Caco-2 (cell line): ENCODE measurements at regions of chr10 and their contacts with region 1.

Region 1: GRCh38 chr10:48656241-48656913 is 28.3 kb upstream of the WDFY4 start:
- DNase-seq: peak; percentile 89 to 99
- H3K4me3 ChIP-seq: peak overlapping the region; percentile 55
- H3K4me3 Mint-ChIP-seq: peak overlapping the region; percentile 77
- H3K27ac Mint-ChIP-seq: no peak overlapping the region
- H3K4me1 ChIP-seq: peaks cover 12% of the 10 kb centered on the region
- H3K4me1 Mint-ChIP-seq: peaks cover 5% of the 10 kb centered on the region
- H3K27me3 ChIP-seq: peaks cover 1% of the 10 kb centered on the region; the same call in 1 of the 2 replicates
- H3K27me3 Mint-ChIP-seq: peaks cover 31% of the 10 kb centered on the region
- CTCF ChIP-seq: peak; percentile 96 to 99

Region 2: GRCh38 chr10:48444266-48444665 is 212.1 kb before region 1 on chr10:
- CTCF ChIA-PET with region 1: interaction called, 15 read pairs
- POLR2A ChIA-PET with region 1: interaction called, 3 read pairs
- intact Hi-C with region 1: loop called (anchors 1 kb)
- DNase-seq: peak; percentile 52 to 56
- H3K4me3 ChIP-seq: no peak overlapping the region
- H3K4me3 Mint-ChIP-seq: no peak overlapping the region
- H3K27ac Mint-ChIP-seq: no peak overlapping the region
- H3K4me1 ChIP-seq: peaks cover 8% of the 10 kb centered on the region
- H3K4me1 Mint-ChIP-seq: peaks cover 15% of the 10 kb centered on the region
- H3K27me3 ChIP-seq: no peaks in the 10 kb centered on the region
- H3K27me3 Mint-ChIP-seq: no peaks in the 10 kb centered on the region
- CTCF ChIP-seq: peak; percentile 29 to 68

Region 3: DNA sequence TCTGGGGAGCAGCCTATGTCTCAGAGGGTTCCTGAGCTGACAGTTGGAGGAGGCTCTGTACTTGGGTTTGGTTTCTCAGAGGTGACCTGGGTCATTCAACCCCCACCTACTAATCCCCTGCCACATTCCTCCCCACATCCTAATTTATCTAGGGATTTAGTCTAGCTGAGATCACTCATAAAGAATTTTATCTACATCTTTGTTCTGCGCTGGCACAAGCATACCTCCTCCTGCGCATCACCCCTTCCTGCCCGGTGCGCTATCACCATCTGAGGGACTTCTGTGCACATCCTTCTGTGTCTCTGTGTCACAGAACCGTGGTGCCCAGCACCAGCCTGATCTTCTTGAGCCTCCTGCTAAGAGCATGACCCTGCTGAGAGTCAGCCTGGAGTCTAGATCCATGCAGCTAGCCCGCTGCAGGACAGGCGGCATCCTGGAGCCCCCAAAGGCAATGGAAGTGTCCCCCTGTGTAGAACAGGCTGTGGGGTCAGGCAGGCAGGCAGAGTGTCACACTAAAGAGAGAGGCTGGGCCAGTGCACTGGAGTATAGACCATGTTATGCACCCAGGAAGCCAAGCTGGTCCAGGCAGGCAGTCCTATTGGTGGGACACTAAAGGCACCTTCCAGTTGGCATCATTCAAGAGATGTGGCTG is 115.1 kb before region 1 on chr10:
- CTCF ChIA-PET with region 1: interaction called, 27 read pairs
- POLR2A ChIA-PET with region 1: no interaction called
- intact Hi-C with region 1: no loop called
- DNase-seq: peak; percentile 75 to 76
- H3K4me3 ChIP-seq: no peak overlapping the region
- H3K4me3 Mint-ChIP-seq: no peak overlapping the region
- H3K27ac Mint-ChIP-seq: peak overlapping the region; percentile 43
- H3K4me1 ChIP-seq: peaks cover 58% of the 10 kb centered on the region
- H3K4me1 Mint-ChIP-seq: peaks cover 34% of the 10 kb centered on the region
- H3K27me3 ChIP-seq: no peaks in the 10 kb centered on the region
- H3K27me3 Mint-ChIP-seq: no peaks in the 10 kb centered on the region
- CTCF ChIP-seq: no peak

Region 4: DNA sequence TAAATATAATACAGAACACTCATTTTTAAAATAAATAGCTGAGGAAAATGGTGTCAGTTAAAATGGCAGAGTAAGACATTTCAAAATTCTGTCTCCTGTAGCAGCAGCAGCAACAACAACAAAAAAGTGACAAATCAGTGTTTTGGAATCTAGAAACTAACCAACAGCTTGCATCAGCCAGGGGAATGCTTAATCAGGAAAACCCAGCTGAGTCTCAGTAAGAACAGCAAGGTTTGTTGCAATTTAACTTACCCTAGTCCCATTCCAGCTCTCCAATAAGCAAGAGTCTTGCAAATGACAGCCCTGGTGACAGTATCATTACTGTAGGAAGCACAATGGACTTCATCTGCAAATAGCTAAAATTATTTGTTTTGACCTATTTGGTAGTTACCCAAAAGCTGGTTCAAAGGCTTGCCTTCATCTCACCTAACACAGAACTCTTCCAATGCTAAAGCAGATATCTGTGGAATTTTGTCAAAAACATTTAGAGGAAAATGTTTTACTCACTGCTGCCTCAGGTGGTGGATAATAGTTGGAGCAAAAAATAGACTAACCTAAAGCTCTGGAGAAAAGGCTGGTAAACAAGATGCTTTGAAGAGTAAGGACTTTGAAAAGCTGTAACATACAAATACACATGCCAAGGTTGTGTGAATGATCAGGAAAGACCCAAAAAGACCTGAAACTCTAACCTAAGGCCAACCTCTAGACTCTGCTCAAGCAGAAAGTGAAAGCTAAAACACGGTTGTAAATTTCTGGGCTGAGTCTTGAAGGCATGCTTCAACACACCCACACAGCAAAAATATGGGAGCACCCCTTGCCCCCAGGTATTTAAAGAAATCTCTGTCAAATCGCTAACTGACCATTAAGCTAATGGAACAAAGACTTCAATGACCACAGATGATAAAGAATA is 41.6 kb before region 1 on chr10:
- CTCF ChIA-PET with region 1: interaction called, 21 read pairs
- POLR2A ChIA-PET with region 1: no interaction called
- intact Hi-C with region 1: loop called (anchors 2 kb)
- DNase-seq: no peak
- H3K4me3 ChIP-seq: no peak overlapping the region
- H3K4me3 Mint-ChIP-seq: no peak overlapping the region
- H3K27ac Mint-ChIP-seq: no peak overlapping the region
- H3K4me1 ChIP-seq: no peaks in the 10 kb centered on the region
- H3K4me1 Mint-ChIP-seq: no peaks in the 10 kb centered on the region
- H3K27me3 ChIP-seq: no peaks in the 10 kb centered on the region
- H3K27me3 Mint-ChIP-seq: peaks cover 19% of the 10 kb centered on the region
- CTCF ChIP-seq: peak; percentile 44 to 62

Region 5: GRCh38 chr10:48751730-48752129 is 95.4 kb after region 1 on chr10:
- CTCF ChIA-PET with region 1: no interaction called
- POLR2A ChIA-PET with region 1: no interaction called
- intact Hi-C with region 1: no loop called
- DNase-seq: no peak
- H3K4me3 ChIP-seq: no peak overlapping the region
- H3K4me3 Mint-ChIP-seq: no peak overlapping the region
- H3K27ac Mint-ChIP-seq: no peak overlapping the region
- H3K4me1 ChIP-seq: no peaks in the 10 kb centered on the region
- H3K4me1 Mint-ChIP-seq: no peaks in the 10 kb centered on the region
- H3K27me3 ChIP-seq: no peaks in the 10 kb centered on the region
- H3K27me3 Mint-ChIP-seq: peaks cover 23% of the 10 kb centered on the region
- CTCF ChIP-seq: no peak

Region 6: DNA sequence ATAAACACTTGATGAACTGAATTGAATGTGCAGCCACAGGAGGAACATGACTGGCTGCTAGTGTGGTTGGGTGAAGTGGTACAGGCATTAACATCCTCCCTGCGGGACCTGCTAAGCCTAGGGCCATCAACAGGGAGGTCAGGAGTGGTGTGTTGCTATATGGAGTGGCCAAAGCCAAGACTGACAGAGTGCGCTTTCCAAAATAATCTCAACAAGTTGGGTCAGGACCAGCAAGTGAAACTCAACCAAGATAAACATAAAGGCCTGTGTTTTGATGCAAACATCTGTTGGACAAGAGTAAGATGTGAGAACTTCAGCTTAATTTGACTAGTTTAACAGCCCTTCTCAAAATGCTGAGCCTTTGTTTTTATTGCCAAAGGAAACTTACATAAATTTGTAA is 126.0 kb after region 1 on chr10:
- CTCF ChIA-PET with region 1: no interaction called
- POLR2A ChIA-PET with region 1: no interaction called
- intact Hi-C with region 1: no loop called
- DNase-seq: no peak
- H3K4me3 ChIP-seq: no peak overlapping the region
- H3K4me3 Mint-ChIP-seq: no peak overlapping the region
- H3K27ac Mint-ChIP-seq: no peak overlapping the region
- H3K4me1 ChIP-seq: no peaks in the 10 kb centered on the region
- H3K4me1 Mint-ChIP-seq: no peaks in the 10 kb centered on the region
- H3K27me3 ChIP-seq: no peaks in the 10 kb centered on the region; the same call in 1 of the 2 replicates
- H3K27me3 Mint-ChIP-seq: peaks cover 13% of the 10 kb centered on the region
- CTCF ChIP-seq: no peak

Region 7: DNA sequence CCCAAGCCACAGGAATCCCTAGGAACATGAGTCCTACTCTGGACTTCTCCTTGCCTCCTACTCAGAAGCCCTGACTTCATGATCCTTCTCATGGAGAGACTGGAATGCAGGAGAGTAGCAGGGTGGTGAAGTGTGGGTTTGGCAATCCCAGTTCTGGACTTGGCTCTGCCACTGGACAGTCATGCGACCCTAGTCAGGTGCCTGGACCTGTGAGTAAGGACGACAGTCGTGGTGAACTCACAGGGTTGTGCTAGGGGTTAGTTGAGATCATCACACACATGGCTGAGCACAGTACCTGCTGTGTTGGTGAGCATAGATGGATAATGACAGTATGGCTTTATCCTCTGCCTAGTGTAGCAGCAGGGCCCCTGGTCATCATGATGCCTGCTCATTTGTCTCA is 165.3 kb after region 1 on chr10:
- CTCF ChIA-PET with region 1: interaction called, 3 read pairs
- POLR2A ChIA-PET with region 1: no interaction called
- intact Hi-C with region 1: loop called (anchors 1 kb)
- DNase-seq: no peak
- H3K4me3 ChIP-seq: no peak overlapping the region
- H3K4me3 Mint-ChIP-seq: no peak overlapping the region
- H3K27ac Mint-ChIP-seq: no peak overlapping the region
- H3K4me1 ChIP-seq: no peaks in the 10 kb centered on the region
- H3K4me1 Mint-ChIP-seq: no peaks in the 10 kb centered on the region
- H3K27me3 ChIP-seq: peaks cover 1% of the 10 kb centered on the region; the same call in 1 of the 2 replicates
- H3K27me3 Mint-ChIP-seq: peaks cover 28% of the 10 kb centered on the region
- CTCF ChIP-seq: no peak

Region 8: GRCh38 chr10:49164559-49165188 is 508.3 kb after region 1 on chr10:
- CTCF ChIA-PET with region 1: interaction called, 19 read pairs
- POLR2A ChIA-PET with region 1: no interaction called
- intact Hi-C with region 1: loop called (anchors 1 kb)
- DNase-seq: peak in 1 of 2 experiments; percentile 68
- H3K4me3 ChIP-seq: no peak overlapping the region
- H3K4me3 Mint-ChIP-seq: no peak overlapping the region
- H3K27ac Mint-ChIP-seq: no peak overlapping the region
- H3K4me1 ChIP-seq: no peaks in the 10 kb centered on the region
- H3K4me1 Mint-ChIP-seq: no peaks in the 10 kb centered on the region
- H3K27me3 ChIP-seq: no peaks in the 10 kb centered on the region; the same call in 1 of the 2 replicates
- H3K27me3 Mint-ChIP-seq: peaks cover 24% of the 10 kb centered on the region
- CTCF ChIP-seq: peak; percentile 63 to 94